ENCODE measurements at regions of chrX and their contacts with region 1.

Region 1: GRCh38 chrX:124232523-124233201 is 99.8 kb upstream of the TEX13D start:
- DNase-seq: no peak
- ATAC-seq: no peak
- H3K4me3 ChIP-seq: no peak overlapping the region
- H3K27ac ChIP-seq: no peak overlapping the region
- H3K4me1 ChIP-seq: no peaks in the 10 kb centered on the region
- H3K27me3 ChIP-seq: no peaks in the 10 kb centered on the region
- CTCF ChIP-seq: no peak

Region 2: DNA sequence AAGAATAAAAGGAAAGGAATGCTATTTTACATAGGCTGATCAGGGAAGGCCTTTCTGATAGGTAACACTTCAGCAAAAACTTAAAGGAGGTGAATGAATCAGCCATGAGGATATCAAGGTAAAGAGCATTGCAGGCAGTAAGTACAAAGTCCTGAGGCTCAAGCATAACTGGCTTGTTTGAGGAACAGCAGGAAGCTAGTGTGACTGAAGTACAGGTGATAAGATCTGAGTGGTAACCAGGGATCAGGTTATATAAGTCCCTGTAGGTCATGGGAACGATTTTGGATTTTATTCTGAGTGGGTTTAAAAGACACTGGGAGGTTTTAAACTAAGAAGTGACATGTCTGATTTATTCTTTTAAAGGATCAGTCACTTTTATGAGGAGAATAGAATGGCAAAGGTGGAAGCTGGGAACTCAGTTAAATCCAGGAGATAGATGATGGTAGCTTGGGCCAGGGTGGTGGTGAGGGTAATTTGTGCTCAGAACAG is 452.7 kb before region 1 on chrX:
- intact Hi-C with region 1: no loop called
- DNase-seq: no peak
- ATAC-seq: no peak
- H3K4me3 ChIP-seq: no peak overlapping the region
- H3K27ac ChIP-seq: no peak overlapping the region
- H3K4me1 ChIP-seq: no peaks in the 10 kb centered on the region
- H3K27me3 ChIP-seq: no peaks in the 10 kb centered on the region
- CTCF ChIP-seq: no peak

Region 3: DNA sequence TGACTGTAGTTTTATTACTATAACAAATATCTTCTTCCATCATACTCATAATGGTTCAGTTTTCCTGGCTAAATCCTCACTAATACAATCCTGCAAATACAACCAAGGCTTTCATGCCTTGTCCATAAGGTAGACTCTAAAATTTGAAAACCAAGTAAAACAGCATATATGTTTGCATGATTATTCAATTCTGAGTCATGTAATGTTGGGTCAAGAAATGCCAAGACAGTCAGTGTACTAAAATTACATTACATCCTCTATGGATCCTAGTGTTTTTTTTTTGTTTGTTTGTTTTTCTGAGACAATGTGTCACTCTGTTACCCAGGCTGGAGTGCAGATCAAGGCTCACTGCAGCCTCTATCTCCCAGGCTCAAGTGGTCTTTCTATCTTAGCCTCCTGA is 61.1 kb after region 1 on chrX:
- intact Hi-C with region 1: loop called in 1 of 2 experiments (anchors 10 kb)
- DNase-seq: no peak
- ATAC-seq: no peak
- H3K4me3 ChIP-seq: no peak overlapping the region
- H3K27ac ChIP-seq: no peak overlapping the region
- H3K4me1 ChIP-seq: no peaks in the 10 kb centered on the region
- H3K27me3 ChIP-seq: no peaks in the 10 kb centered on the region
- CTCF ChIP-seq: no peak

Region 4: DNA sequence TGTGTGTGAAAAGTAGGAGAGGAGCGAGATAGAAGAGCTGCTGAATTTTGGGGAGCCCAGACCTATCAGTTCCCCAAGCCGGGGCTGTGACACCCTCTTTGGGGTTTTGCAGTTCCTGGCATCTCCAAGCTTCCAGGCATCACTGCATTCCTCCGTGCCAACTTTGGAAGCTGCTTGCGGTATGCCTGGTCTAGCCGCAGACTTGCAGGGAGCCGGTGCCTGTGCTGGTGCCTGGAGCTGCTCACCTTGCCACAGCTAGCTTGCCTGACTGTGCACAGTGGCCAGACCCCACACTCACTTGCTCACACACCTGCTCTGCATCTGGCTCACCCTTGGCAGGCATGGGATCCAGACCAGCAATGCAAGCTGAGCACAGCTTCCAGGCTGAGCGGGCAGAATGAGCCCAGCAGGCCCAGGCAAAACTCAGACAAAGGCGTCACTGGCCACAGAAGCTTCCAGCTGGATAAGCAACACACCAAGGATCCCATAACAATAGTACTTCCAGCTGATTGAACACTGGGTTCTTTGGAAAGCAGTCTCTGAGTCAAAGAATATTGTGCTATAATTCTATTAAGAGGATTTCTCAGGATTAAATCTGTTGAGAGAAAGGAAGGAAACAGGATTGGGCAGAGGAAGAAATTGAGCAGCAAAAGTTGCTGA is 1477.9 kb after region 1 on chrX:
- intact Hi-C with region 1: no loop called
- DNase-seq: no peak
- ATAC-seq: no peak
- H3K4me3 ChIP-seq: no peak overlapping the region
- H3K27ac ChIP-seq: no peak overlapping the region
- H3K4me1 ChIP-seq: no peaks in the 10 kb centered on the region
- H3K27me3 ChIP-seq: no peaks in the 10 kb centered on the region
- CTCF ChIP-seq: no peak